CD8-positive, alpha-beta T cell (primary cell): ENCODE measurements at regions of chr2 and their contacts with region 1.

Region 1: GRCh38 chr2:157876066-157876787 is at the start of gene ACVR1:
- DNase-seq: peak; percentile 37 to 92 (median 78)
- ATAC-seq: peak; percentile 72
- H3K4me3 ChIP-seq: peak within 1 kb of the TSS; percentile 53 to 74
- H3K4me3 Mint-ChIP-seq: peak within 1 kb of the TSS; percentile 94
- H3K27ac ChIP-seq: peak within 1 kb of the TSS; percentile 1 to 29
- H3K27ac Mint-ChIP-seq: peak within 1 kb of the TSS; percentile 90
- H3K4me1 ChIP-seq: peaks cover 10% of the 10 kb centered on the region
- H3K4me1 Mint-ChIP-seq: peaks cover 48% of the 10 kb centered on the region
- H3K27me3 ChIP-seq: no peaks in the 10 kb centered on the region
- H3K27me3 Mint-ChIP-seq: no peaks in the 10 kb centered on the region
- CTCF ChIP-seq: peak; percentile 27
- total RNA-seq, gene ACVR1: 7.0 to 8.3 TPM

Region 2: DNA sequence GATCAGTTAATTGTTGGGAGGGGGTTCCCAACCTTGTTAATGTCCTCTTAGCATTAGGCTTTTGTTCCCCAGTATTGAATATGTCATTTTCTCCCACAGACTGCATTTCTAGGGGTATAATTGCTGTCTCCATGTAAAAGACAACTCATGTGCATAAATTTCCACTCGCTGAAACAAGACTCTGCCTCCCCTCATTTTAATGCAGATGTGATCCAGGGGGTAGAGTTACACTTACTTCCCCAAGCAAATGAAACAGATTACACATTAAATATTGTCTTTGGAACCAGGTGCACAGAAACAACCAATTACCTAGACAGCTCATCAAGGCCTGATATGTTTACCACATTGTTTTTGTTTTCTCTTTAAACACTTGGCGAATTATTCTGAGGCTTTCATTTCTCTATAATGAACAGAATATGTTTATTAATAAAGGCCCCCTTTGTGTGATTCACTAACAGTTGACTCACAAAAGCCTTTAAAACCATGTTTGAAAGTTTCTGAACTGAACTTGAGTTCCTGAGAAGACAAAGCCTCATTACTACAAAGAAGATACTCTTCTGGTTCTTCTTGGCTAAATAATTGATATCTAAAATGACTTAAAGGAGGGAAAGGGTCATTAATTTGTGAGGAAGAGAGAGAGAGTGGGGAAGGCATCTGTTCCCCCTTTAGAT is 14.9 kb after region 1 on chr2:
- CTCF ChIA-PET with region 1: interaction called, 45 read pairs
- POLR2A ChIA-PET with region 1: interaction called, 21 read pairs
- intact Hi-C with region 1: loop called in 1 of 2 experiments (anchors 2 kb)
- DNase-seq: no peak
- ATAC-seq: no peak
- H3K4me3 ChIP-seq: no peak overlapping the region
- H3K4me3 Mint-ChIP-seq: peak overlapping the region; percentile 52
- H3K27ac ChIP-seq: no peak overlapping the region
- H3K27ac Mint-ChIP-seq: peak overlapping the region; percentile 72
- H3K4me1 ChIP-seq: peaks cover 19% of the 10 kb centered on the region
- H3K4me1 Mint-ChIP-seq: peaks cover 34% of the 10 kb centered on the region
- H3K27me3 ChIP-seq: no peaks in the 10 kb centered on the region
- H3K27me3 Mint-ChIP-seq: no peaks in the 10 kb centered on the region
- CTCF ChIP-seq: no peak

Region 3: GRCh38 chr2:158456309-158457066 is 580.3 kb after region 1 on chr2 and contains the starts of genes CCDC148 and PKP4:
- CTCF ChIA-PET with region 1: no interaction called
- POLR2A ChIA-PET with region 1: no interaction called
- intact Hi-C with region 1: loop called (anchors 5 kb)
- DNase-seq: peak; percentile 74 to 97 (median 86)
- ATAC-seq: peak; percentile 91
- H3K4me3 ChIP-seq: peak within 1 kb of the TSS; percentile 69 to 81
- H3K4me3 Mint-ChIP-seq: peak within 1 kb of the TSS; percentile 96
- H3K27ac ChIP-seq: peak within 1 kb of the TSS; percentile 23 to 49
- H3K27ac Mint-ChIP-seq: peak within 1 kb of the TSS; percentile 76
- H3K4me1 ChIP-seq: peaks cover 12% of the 10 kb centered on the region
- H3K4me1 Mint-ChIP-seq: peaks cover 16% of the 10 kb centered on the region
- H3K27me3 ChIP-seq: no peaks in the 10 kb centered on the region
- H3K27me3 Mint-ChIP-seq: peaks cover 13% of the 10 kb centered on the region
- CTCF ChIP-seq: no peak
- total RNA-seq, gene CCDC148: not detected
- total RNA-seq, gene PKP4: 5.7 to 8.1 TPM